ENCODE measurements at regions of chr11 and their contacts with region 1.

Region 1: DNA sequence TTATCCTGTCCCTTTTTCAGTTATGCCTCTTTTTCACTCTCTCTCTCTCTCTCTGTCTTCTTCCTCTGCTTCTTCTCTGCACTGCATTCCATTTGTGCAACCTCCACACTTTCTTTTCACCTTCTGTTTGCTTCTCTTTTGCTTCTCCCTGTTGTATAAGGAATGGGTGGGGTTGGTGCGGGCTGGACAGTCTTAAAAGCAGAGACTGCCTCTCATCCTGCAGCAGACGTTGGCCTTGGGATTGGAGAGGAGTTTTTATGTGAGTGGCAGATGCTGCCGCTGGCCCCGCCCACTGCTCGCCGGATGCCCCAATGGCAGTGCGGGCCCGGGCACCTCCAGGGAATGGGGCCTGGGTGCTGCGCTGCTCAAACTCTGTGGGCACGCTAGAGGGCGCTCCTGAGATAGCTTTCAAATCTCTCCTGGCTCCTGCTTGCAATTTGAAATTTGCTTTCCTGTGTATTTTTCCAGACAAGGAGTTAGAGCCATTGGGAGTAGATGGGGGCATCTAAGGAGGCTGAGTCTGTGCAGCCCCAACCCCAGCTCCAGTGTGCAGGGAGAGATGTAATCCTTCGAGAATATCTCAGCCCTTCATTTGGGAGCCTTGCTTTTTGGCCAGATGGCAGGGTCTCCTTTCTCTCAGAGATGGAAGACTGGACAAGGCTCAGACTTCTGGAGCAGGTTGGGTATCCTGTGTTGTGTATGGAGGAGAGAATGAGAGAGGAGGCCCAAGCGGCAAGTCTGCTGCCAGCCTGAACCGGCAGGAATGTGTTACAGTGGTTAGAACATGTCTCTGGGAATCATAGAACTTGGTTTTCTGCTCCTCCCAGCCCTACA is 81.2 kb downstream of the GRAMD1B start:
- DNase-seq: peak; percentile 89
- ATAC-seq: peak; percentile 91

Region 2: DNA sequence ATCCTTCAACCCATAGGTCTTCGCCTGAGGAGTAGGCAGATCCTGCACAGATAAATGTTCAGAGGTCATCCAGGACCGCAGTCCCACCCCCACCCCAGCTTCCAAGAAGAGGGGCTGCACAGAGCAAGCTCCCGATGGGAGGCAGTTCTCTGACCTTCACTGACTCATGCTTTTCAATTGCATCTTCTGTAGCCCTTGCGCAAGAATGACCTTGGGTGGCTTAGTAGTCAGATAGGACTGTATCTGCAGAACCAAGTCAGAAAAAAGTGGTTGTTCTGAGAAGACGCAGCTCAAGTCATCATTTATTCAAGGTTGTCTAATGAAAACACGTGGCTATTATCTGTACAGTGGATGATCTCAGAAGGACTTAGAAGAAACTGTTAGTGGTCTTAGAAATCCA is 97.6 kb before region 1 on chr11:
- intact Hi-C with region 1: no loop called
- DNase-seq: no peak
- ATAC-seq: no peak

Region 3: GRCh38 chr11:123475471-123475870 is 35.8 kb before region 1 on chr11:
- intact Hi-C with region 1: no loop called
- DNase-seq: no peak
- ATAC-seq: no peak

Region 4: GRCh38 chr11:123560006-123560405 is 48.8 kb after region 1 on chr11:
- intact Hi-C with region 1: loop called (anchors 2 kb)
- DNase-seq: peak; percentile 87
- ATAC-seq: peak; percentile 69

Region 5: GRCh38 chr11:123577081-123577598 is 65.9 kb after region 1 on chr11:
- intact Hi-C with region 1: loop called (anchors 1 kb)
- DNase-seq: peak; percentile 89
- ATAC-seq: peak; percentile 66